Naive thymus-derived CD4-positive, alpha-beta T cell (primary cell): ENCODE measurements at regions of chr3 and their contacts with region 1.

Region 1: GRCh38 chr3:39126532-39127071 is 19.1 kb downstream of the TTC21A start:
- DNase-seq: peak in 4 of 9 donors; percentile 39 to 59 (median 50)
- ATAC-seq: peak; percentile 60
- H3K4me3 ChIP-seq: no peak overlapping the region
- H3K4me3 Mint-ChIP-seq: no peak overlapping the region
- H3K27ac ChIP-seq: no peak overlapping the region
- H3K27ac Mint-ChIP-seq: peak overlapping the region in 6 of 9 donors; percentile 22 to 87 (median 54)
- H3K4me1 ChIP-seq: peaks cover 12 to 14% of the 10 kb centered on the region in 2 donors
- H3K4me1 Mint-ChIP-seq: peaks cover 15 to 34% (median 24%) of the 10 kb centered on the region in 7 donors
- H3K27me3 ChIP-seq: no peaks in the 10 kb centered on the region
- H3K27me3 Mint-ChIP-seq: peaks cover 0 to 10% (median 0%) of the 10 kb centered on the region in 5 donors

Region 2: DNA sequence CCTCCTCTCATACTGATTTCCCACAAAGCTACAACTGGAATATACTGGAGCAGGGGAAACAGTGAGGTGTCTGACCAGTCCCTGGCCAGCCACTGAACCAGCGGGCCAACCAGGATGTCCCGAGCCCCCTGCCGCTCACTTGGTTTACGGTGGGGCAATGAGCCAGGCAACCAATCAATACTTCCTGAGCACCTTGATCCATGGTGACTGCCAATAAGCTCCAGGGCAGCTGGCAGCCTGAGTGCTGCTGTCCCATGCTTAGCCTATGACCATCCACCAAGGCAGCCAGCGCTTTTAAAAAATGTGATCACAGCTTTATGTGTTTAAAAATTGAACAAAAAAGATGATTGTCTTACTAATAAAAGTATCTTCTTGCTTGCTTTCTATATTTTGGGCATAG is 314.8 kb before region 1 on chr3:
- CTCF ChIA-PET with region 1: no interaction called
- POLR2A ChIA-PET with region 1: no interaction called
- intact Hi-C with region 1: no loop called
- DNase-seq: no peak
- ATAC-seq: no peak
- H3K4me3 ChIP-seq: no peak overlapping the region
- H3K4me3 Mint-ChIP-seq: no peak overlapping the region
- H3K27ac ChIP-seq: no peak overlapping the region
- H3K27ac Mint-ChIP-seq: no peak overlapping the region
- H3K4me1 ChIP-seq: no peaks in the 10 kb centered on the region
- H3K4me1 Mint-ChIP-seq: no peaks in the 10 kb centered on the region
- H3K27me3 ChIP-seq: no peaks in the 10 kb centered on the region
- H3K27me3 Mint-ChIP-seq: peaks cover 6 to 31% (median 22%) of the 10 kb centered on the region in 5 donors

Region 3: GRCh38 chr3:39146984-39147591 is 20.5 kb after region 1 on chr3:
- CTCF ChIA-PET with region 1: interaction called, 5 read pairs
- POLR2A ChIA-PET with region 1: interaction called, 7 read pairs
- intact Hi-C with region 1: loop called in 1 of 2 experiments (anchors 2 kb)
- DNase-seq: peak in 6 of 9 donors; percentile 22 to 73 (median 44)
- ATAC-seq: peak; percentile 63
- H3K4me3 ChIP-seq: peak overlapping the region; percentile 59
- H3K4me3 Mint-ChIP-seq: peak overlapping the region; percentile 85 to 99 (median 95)
- H3K27ac ChIP-seq: peak overlapping the region; percentile 64
- H3K27ac Mint-ChIP-seq: peak overlapping the region; percentile 92 to 99 (median 98)
- H3K4me1 ChIP-seq: peaks cover 52 to 61% of the 10 kb centered on the region in 2 donors
- H3K4me1 Mint-ChIP-seq: peaks cover 67 to 81% (median 75%) of the 10 kb centered on the region in 7 donors
- H3K27me3 ChIP-seq: no peaks in the 10 kb centered on the region
- H3K27me3 Mint-ChIP-seq: no peaks in the 10 kb centered on the region

Region 4: GRCh38 chr3:39180546-39181346 is 54.1 kb after region 1 on chr3:
- CTCF ChIA-PET with region 1: interaction called, 5 read pairs
- POLR2A ChIA-PET with region 1: no interaction called
- intact Hi-C with region 1: loop called in 1 of 2 experiments (anchors 1 kb)
- DNase-seq: peak; percentile 80 to 86 (median 83)
- ATAC-seq: peak; percentile 94
- H3K4me3 ChIP-seq: peak overlapping the region; percentile 74
- H3K4me3 Mint-ChIP-seq: peak overlapping the region; percentile 79 to 94 (median 87)
- H3K27ac ChIP-seq: peak overlapping the region; percentile 68
- H3K27ac Mint-ChIP-seq: peak overlapping the region; percentile 71 to 94 (median 88)
- H3K4me1 ChIP-seq: peaks cover 23 to 33% of the 10 kb centered on the region in 2 donors
- H3K4me1 Mint-ChIP-seq: peaks cover 24 to 51% (median 38%) of the 10 kb centered on the region in 7 donors
- H3K27me3 ChIP-seq: no peaks in the 10 kb centered on the region
- H3K27me3 Mint-ChIP-seq: no peaks in the 10 kb centered on the region

Region 5: DNA sequence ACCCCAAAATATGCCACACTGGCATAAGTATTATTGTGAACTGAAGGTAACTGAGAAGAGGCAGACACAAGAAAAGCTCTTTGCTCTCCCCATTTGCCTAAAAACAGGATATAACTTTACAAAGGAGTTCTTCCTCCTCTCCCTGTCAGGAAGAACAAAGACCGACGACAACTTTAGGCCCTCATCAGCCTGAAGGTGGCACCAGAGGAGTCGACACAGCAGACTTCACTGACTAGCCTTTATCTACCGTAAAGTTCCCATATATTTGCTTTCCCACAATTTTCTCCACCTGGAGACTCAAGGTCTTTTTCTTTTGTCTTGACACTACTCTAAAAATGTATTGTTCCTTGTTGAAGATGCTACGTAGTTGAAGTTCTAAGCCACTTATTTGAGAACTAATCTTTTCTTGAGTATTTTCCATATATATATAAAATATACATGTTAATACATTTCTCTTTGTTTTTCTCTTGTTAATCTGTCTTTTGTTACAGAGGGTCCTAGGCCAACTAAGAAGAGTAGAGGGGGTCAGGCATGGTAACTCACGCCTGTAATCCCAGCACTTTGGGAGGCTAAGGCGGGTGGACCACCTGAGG is 82.0 kb after region 1 on chr3:
- CTCF ChIA-PET with region 1: interaction called, 4 read pairs
- POLR2A ChIA-PET with region 1: no interaction called
- intact Hi-C with region 1: loop called in 1 of 2 experiments (anchors 5 kb)
- DNase-seq: peak in 5 of 9 donors; percentile 12 to 36 (median 22)
- ATAC-seq: peak; percentile 70
- H3K4me3 ChIP-seq: no peak overlapping the region
- H3K4me3 Mint-ChIP-seq: no peak overlapping the region
- H3K27ac ChIP-seq: no peak overlapping the region
- H3K27ac Mint-ChIP-seq: no peak overlapping the region
- H3K4me1 ChIP-seq: peaks cover 0 to 6% of the 10 kb centered on the region in 2 donors
- H3K4me1 Mint-ChIP-seq: peaks cover 0 to 25% (median 7%) of the 10 kb centered on the region in 7 donors
- H3K27me3 ChIP-seq: no peaks in the 10 kb centered on the region
- H3K27me3 Mint-ChIP-seq: peaks cover 0 to 32% (median 3%) of the 10 kb centered on the region in 5 donors